Head of caudate nucleus (tissue), 42 donors: ENCODE measurements at regions of chr4 and their contacts with region 1.

Region 1: GRCh38 chr4:87270144-87270543 is 49.7 kb upstream of the KLHL8 start:
- DNase-seq: peak in 34 of 42 donors; percentile 6 to 80 (median 53)

Region 2: GRCh38 chr4:87006676-87007527 is 263.2 kb before region 1 on chr4:
- intact Hi-C with region 1: no loop called
- DNase-seq: peak; percentile 82 to 96 (median 91)

Region 3: DNA sequence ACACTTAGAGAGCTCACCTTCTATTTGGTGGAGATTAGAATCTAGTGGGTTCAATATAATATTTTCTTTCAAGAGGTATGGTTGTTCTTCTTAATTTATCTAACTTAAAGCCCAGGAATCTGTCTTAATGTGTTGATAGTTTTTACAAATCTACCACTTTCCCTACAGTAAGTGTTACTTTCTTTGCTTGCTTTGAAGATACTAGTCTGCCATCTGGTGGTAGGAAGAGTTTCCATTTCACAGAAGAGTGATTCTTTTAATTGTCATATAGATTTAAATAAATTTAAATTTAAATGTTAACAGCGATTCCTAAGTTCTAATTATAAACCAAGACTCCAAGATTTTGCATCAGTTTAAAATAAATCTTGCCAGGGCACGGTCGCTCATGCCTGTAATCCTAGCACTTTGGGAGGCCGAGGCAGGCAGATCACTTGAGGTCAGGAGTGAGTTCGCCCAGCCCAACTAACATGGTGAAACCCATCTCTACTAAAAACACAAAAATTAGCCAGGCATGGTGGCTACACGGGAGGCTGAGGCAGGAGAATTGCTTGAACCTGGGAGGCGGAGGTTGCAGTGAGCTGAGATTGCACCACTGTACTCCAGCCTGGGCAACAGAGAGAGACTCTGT is 195.7 kb after region 1 on chr4:
- intact Hi-C with region 1: loop called (anchors 5 kb)
- DNase-seq: peak in 4 of 42 donors; percentile 15 to 59 (median 20)